ENCODE measurements at regions of chr9 and their contacts with region 1.

Region 1: DNA sequence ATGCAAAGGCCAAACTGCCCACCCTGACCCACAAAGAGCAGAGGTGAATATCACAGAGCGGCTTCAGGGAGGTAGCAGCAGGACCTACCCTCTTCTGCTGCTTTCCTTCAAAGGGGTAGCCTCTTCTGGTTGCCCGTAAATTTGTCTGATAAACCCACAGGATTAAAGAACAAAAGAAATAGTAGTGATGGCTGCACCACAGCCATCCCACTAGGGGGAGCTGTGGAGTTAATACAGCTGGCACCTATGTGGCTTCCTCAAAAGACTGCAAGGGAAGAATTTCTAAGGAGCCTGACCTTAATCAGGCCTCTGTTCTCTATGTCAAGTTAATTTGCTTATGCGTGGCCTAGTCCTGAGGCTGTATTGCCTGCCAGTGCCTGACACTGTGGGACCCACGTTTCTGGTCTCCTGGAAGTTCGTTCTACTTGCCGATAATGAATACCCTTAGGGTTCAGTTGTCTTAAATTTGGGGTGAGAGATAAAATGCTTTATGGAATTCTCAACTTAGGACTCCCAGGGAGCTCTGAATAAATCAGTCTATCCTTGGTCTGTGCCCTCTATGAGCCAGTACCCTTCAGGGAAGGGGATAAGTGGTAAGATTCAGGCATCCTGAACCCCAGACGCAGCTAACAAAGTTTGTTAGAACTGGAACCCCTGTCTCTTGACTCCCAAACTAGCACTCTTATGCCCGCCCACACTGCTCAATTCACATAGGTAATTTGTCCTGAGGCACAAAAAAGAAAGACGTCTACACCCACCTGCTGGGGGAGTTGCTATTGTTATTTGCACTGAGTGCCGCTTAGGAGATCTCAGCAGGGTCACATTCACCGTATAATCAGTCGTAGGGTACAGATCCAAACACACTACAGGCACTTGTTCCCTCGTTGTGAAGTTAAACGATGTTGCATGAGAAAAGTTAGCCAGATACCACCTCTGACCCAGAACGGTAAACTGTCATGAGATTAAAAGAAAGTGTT is 77.1 kb downstream of the SUSD1 start:
- DNase-seq: peak; percentile 74
- ATAC-seq: peak; percentile 90
- H3K4me3 Mint-ChIP-seq: no peak overlapping the region
- H3K27ac Mint-ChIP-seq: no peak overlapping the region
- H3K4me1 Mint-ChIP-seq: peaks cover 31% of the 10 kb centered on the region
- H3K27me3 Mint-ChIP-seq: no peaks in the 10 kb centered on the region
- CTCF ChIP-seq: peak; percentile 85

Region 2: GRCh38 chr9:111759762-111760639 is 338.0 kb before region 1 on chr9:
- CTCF ChIA-PET with region 1: interaction called, 10 read pairs
- POLR2A ChIA-PET with region 1: no interaction called
- intact Hi-C with region 1: no loop called
- DNase-seq: peak; percentile 68
- ATAC-seq: peak; percentile 60
- H3K4me3 Mint-ChIP-seq: no peak overlapping the region
- H3K27ac Mint-ChIP-seq: no peak overlapping the region
- H3K4me1 Mint-ChIP-seq: peaks cover 4% of the 10 kb centered on the region
- H3K27me3 Mint-ChIP-seq: no peaks in the 10 kb centered on the region
- CTCF ChIP-seq: peak; percentile 76

Region 3: DNA sequence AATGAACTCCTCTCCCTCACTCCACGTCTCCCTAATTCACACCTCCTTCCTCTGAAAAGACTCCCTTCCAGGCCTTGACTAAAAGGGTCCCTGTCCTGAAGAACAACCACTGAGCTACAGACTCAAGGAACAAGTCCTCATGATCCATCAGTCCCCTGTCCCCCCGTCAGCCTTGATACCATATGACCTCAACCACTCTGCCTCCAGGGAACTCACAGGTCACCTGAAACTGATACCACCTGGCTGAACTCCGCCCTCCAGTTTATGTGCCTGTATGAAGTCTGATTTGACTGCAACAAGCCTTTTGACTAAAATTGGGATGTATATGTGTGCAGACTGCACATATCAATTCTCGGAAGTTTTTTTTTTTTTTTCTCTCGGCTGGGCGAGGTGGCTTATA is 112.7 kb before region 1 on chr9:
- CTCF ChIA-PET with region 1: no interaction called
- POLR2A ChIA-PET with region 1: no interaction called
- intact Hi-C with region 1: no loop called
- DNase-seq: peak; percentile 20
- ATAC-seq: no peak
- H3K4me3 Mint-ChIP-seq: no peak overlapping the region
- H3K27ac Mint-ChIP-seq: no peak overlapping the region
- H3K4me1 Mint-ChIP-seq: peaks cover 38% of the 10 kb centered on the region
- H3K27me3 Mint-ChIP-seq: no peaks in the 10 kb centered on the region
- CTCF ChIP-seq: no peak

Region 4: DNA sequence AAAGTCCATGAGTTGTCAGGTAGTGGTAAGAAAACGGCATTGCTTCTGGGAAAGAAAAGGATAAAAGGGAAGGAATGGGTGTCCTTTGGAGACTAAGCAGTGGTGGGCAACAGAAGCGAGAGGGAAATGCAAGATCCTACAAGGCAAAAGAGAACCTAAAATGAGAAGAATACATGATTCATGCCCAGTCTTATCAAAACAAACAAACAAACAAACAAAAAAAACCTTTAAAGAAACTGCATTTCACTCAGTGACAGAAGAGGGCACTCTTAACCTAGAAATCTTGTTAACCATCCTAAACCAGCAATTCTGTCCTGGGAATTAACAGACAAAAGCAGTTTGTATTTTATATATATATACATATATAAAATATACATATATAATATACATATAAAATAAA is 11.4 kb before region 1 on chr9:
- CTCF ChIA-PET with region 1: interaction called, 33 read pairs
- POLR2A ChIA-PET with region 1: no interaction called
- intact Hi-C with region 1: no loop called
- DNase-seq: no peak
- ATAC-seq: no peak
- H3K4me3 Mint-ChIP-seq: no peak overlapping the region
- H3K27ac Mint-ChIP-seq: no peak overlapping the region
- H3K4me1 Mint-ChIP-seq: peaks cover 5% of the 10 kb centered on the region
- H3K27me3 Mint-ChIP-seq: no peaks in the 10 kb centered on the region
- CTCF ChIP-seq: peak; percentile 73

Region 5: GRCh38 chr9:112135706-112136105 is 37.7 kb after region 1 on chr9:
- CTCF ChIA-PET with region 1: interaction called, 10 read pairs
- POLR2A ChIA-PET with region 1: no interaction called
- intact Hi-C with region 1: no loop called
- DNase-seq: no peak
- ATAC-seq: no peak
- H3K4me3 Mint-ChIP-seq: no peak overlapping the region
- H3K27ac Mint-ChIP-seq: no peak overlapping the region
- H3K4me1 Mint-ChIP-seq: no peaks in the 10 kb centered on the region
- H3K27me3 Mint-ChIP-seq: no peaks in the 10 kb centered on the region
- CTCF ChIP-seq: no peak

Region 6: DNA sequence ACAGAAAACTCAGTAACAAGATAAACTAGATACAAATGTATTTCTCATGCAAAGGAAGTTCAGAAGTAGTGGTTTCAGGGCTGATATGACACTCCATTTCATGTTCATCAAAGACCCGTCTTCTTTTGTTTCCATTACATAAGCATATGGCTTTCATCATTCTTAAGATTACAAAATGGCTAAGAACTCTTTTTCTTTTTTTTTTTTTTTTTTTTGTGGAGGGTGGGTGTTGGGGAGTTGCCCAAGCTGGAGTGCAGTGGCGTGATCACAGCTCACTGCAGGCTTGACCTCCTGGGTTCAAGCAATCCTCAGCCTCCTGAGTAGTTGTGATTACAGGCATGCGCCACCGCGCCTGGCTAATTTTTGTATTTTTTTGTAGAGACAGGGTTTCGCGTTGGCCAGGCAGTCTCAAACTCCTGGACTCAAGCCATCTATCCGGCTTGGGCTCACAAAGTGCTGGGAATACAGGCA is 257.5 kb after region 1 on chr9:
- CTCF ChIA-PET with region 1: interaction called, 105 read pairs
- POLR2A ChIA-PET with region 1: no interaction called
- intact Hi-C with region 1: loop called (anchors 2 kb)
- DNase-seq: no peak
- ATAC-seq: peak; percentile 77
- H3K4me3 Mint-ChIP-seq: no peak overlapping the region
- H3K27ac Mint-ChIP-seq: peak overlapping the region; percentile 39
- H3K4me1 Mint-ChIP-seq: peaks cover 31% of the 10 kb centered on the region
- H3K27me3 Mint-ChIP-seq: no peaks in the 10 kb centered on the region
- CTCF ChIP-seq: no peak

Region 7: GRCh38 chr9:112379177-112380101 is 281.4 kb after region 1 on chr9:
- CTCF ChIA-PET with region 1: interaction called, 3 read pairs
- POLR2A ChIA-PET with region 1: no interaction called
- intact Hi-C with region 1: loop called (anchors 5 kb)
- DNase-seq: peak; percentile 99
- ATAC-seq: peak; percentile 94
- H3K4me3 Mint-ChIP-seq: peak overlapping the region; percentile 87
- H3K27ac Mint-ChIP-seq: peak overlapping the region; percentile 98
- H3K4me1 Mint-ChIP-seq: peaks cover 32% of the 10 kb centered on the region
- H3K27me3 Mint-ChIP-seq: no peaks in the 10 kb centered on the region
- CTCF ChIP-seq: no peak

Measured in activated CD8-positive, alpha-beta T cell treated with anti-CD3 and anti-CD28 coated beads for 36 hours (primary cell).